Endothelial cell of umbilical vein (primary cell): ENCODE measurements at regions of chr22 and their contacts with region 1.

Region 1: DNA sequence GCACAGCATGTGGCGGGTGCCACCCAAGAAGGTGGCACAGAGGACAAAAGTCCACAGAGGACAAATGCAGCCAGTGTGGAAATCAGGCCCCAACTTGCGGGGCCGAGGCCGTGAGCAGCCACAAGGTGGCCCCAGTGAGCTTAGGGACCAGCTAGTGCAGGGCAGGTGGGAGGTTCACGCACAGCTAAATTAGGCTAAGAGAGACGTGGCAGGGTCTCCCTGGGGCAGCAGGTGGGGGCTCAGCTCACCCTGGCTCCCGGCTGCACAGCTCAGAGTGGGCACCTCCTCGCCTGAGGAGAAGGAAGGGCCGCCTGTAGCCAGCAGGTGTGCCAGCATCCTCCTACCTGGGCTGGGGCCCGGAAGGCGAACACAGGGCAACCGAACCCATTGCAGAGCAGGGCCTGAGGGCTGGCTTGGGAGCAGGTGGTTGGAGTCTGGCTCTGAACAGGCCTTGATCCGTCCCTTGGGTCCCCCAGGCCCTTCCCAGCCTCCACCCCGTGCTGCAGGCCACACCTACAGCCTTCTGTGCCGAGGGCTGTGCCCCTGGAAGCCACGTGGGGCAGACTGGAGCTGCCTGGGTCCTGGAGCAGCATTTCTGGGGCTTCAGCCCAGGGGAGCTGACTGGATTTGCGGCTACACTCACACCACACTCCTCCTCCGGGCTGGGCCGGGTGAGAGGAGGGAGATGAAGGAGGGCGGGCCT is 26.1 kb upstream of the CELSR1 start:
- DNase-seq: peak; percentile 48
- H3K4me3 ChIP-seq: no peak overlapping the region
- H3K27ac ChIP-seq: no peak overlapping the region
- H3K4me1 ChIP-seq: no peaks in the 10 kb centered on the region
- H3K27me3 ChIP-seq: no peaks in the 10 kb centered on the region
- CTCF ChIP-seq: peak; percentile 77 to 93
- POLR2A ChIP-seq: no peak

Region 2: DNA sequence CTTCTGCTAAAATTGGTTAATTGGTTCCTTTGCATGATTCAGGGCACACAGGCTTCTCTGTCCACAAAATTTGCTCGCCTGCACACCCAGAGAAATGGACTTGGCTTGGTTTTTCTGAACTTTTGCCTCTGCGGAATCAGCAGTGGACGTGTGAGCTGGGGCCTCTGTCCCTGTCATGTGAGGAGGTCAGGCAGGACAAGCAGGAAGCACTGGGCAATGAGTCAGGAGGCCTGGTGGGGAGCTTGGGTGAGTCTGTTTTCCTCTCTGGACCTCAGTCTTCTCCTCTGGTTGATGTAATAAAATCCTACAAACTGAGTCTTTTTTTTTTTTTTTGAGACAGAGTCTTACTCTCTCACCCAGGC is 15.7 kb before region 1 on chr22:
- CTCF ChIA-PET with region 1: interaction called, 22 read pairs
- POLR2A ChIA-PET with region 1: no interaction called
- dilution Hi-C with region 1: no loop called
- intact Hi-C with region 1: no loop called
- DNase-seq: peak; percentile 80
- H3K4me3 ChIP-seq: no peak overlapping the region
- H3K27ac ChIP-seq: peak overlapping the region; percentile 19
- H3K4me1 ChIP-seq: peaks cover 20% of the 10 kb centered on the region
- H3K27me3 ChIP-seq: no peaks in the 10 kb centered on the region
- CTCF ChIP-seq: no peak
- POLR2A ChIP-seq: no peak

Region 3: DNA sequence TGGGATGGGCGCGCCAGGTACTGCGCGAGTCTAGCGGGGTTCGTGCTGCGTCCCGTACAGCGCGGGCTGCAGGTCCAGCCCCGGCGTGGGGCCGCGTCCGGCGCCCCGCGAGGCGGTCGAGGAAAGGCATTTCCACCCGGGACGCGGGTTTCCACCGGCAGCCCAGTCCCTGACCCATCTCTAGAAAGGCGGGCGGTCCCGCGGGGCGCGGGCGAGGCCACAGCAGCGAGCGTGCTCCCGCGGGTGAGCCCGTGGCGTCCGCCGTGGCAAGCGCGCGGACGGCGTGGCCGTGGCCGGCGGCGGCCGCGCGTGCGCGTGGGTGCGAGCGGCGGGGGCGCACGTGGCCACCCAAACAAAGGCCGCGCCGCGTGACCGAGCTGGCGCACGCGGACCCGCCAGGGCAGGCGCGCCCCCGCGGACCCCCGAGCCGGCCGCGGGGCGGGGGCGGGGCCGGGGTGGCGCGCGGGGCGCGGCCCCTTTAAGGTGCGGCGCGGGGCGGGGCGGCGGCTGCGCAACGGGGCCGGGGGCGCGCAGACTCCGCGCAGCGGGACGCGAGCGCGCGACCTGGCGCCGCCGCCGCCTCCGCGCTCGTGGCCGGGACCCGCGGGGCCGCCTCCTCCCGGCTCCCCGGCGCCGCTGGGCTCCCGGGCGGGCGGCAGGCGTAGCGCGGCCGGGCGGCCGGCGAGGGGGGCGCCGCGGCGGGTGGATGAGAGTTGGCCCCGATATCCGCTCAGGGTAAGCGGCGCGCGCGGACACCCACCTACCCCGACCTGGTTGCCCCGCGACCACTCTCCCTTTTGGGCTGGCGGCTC is 13.2 kb after region 1 on chr22:
- CTCF ChIA-PET with region 1: interaction called, 11 read pairs
- POLR2A ChIA-PET with region 1: no interaction called
- dilution Hi-C with region 1: no loop called
- intact Hi-C with region 1: no loop called
- DNase-seq: no peak
- H3K4me3 ChIP-seq: peak overlapping the region in 2 of 3 experiments; percentile 23 to 56
- H3K27ac ChIP-seq: no peak overlapping the region
- H3K4me1 ChIP-seq: peaks cover 19% of the 10 kb centered on the region
- H3K27me3 ChIP-seq: no peaks in the 10 kb centered on the region
- CTCF ChIP-seq: no peak
- POLR2A ChIP-seq: no peak

Region 4: DNA sequence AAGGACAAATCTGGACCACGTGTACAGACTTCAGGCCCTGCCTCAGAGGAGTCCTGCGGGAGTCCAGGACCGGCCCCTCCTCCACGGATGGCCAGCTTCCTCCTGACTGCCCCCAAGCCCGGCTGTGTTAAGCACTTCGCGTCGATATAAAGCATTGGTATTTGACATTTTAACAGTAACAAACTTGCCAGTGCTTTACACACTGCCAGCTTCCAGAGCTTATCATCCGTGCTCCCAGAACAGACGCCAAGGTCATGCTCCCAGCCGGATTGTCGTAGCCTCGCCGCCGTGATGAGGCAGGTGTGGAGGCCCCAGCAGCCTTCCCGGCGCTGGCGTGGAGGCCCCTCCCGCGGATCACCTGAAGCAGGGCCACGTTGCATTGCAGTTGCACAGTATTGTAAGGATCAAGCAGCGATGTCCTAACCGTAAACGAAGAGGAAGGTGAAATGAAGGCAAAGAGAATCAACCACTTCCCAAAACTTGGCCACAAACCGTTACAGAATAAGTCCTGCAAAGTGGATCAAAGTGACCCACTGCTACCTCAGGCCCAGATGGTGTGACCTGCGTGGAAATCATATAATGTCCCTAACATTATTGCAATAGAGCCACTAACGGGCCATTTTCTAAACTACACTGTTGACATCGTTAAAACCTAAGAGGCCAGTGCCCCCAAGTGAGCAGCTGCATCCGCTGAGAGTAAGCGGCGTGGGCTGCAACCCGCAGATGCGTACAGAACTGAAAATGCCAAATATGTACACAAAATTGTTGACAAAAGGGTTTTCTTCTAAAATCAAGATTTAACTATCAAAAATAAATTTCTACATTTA is 122.9 kb after region 1 on chr22:
- CTCF ChIA-PET with region 1: interaction called, 10 read pairs
- POLR2A ChIA-PET with region 1: no interaction called
- dilution Hi-C with region 1: no loop called
- intact Hi-C with region 1: loop called (anchors 2 kb)
- DNase-seq: peak; percentile 46
- H3K4me3 ChIP-seq: no peak overlapping the region
- H3K27ac ChIP-seq: no peak overlapping the region
- H3K4me1 ChIP-seq: peaks cover 15% of the 10 kb centered on the region
- H3K27me3 ChIP-seq: no peaks in the 10 kb centered on the region
- CTCF ChIP-seq: no peak
- POLR2A ChIP-seq: no peak

Region 5: DNA sequence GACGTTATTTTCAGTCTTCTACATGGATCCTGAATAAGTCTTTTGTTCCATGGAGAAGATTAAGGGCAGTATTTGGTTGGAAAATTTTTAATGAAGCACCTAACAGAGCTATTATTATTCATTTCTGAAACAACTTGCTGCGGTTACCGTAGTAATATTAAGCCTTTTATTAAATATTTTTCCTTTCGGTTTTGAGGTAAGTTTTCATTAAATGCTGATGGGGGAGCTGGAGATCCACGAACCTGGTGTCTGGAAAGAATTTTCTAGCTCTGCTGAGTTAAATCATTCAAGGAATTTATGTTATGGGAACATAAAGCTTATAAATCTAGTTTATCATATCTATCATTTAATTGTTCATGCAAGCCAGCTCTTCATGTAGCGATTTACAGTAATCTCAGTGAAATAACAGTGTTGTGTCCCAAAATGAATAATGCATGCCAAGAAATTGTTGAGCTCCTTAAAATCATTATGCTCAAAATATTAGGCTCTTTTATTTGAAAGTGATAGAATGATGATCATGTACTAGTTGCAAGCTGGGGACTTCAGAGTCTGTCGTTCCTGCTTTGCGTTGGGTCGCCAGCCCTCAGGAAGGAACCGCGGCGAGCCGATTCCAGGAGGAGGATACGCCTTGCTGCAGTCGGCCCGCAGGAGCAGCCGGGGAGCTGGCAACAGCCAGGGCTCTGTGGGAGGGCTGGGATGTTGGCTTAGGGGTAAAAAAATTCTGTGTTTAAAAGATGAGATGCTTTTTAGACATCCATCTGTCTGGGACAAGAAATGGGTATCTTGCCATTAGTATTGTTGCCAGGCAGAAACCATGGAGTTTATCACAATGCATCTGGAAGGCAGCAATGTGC is 282.0 kb after region 1 on chr22:
- CTCF ChIA-PET with region 1: no interaction called
- POLR2A ChIA-PET with region 1: no interaction called
- dilution Hi-C with region 1: no loop called
- intact Hi-C with region 1: no loop called
- DNase-seq: peak; percentile 76
- H3K4me3 ChIP-seq: peak overlapping the region in 2 of 3 experiments; percentile 14 to 61
- H3K27ac ChIP-seq: peak overlapping the region; percentile 14
- H3K4me1 ChIP-seq: peaks cover 16% of the 10 kb centered on the region
- H3K27me3 ChIP-seq: no peaks in the 10 kb centered on the region
- CTCF ChIP-seq: peak; percentile 22 to 44
- POLR2A ChIP-seq: no peak